RWPE1 (cell line): ENCODE measurements at regions of chr11 and their contacts with region 1.

Region 1: GRCh38 chr11:36702330-36703055 is 104.5 kb upstream of the RAG2 start:
- DNase-seq: peak; percentile 78
- H3K27ac ChIP-seq: no peak overlapping the region
- CTCF ChIP-seq: peak; percentile 86

Region 2: DNA sequence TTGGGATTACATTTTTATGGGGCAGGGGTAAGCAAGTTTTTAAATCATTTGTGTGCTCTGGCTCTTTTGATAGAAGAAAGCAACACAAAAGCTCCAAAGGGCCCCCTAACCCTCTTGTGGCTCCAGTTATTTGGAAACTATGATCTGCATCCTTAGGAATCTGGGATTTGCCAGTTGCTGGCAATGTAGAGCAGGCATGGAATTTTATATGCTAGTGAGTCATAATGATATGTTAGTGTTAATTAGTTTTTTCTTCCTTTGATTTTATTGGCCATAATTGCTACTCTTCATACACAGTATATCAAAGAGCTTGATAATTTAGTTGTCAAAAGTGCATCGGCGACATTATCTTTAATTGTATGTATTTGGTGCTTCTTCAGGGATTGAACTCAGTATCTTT is 124.6 kb before region 1 on chr11:
- CTCF ChIA-PET with region 1: no interaction called
- POLR2A ChIA-PET with region 1: no interaction called
- DNase-seq: peak; percentile 10
- H3K27ac ChIP-seq: no peak overlapping the region
- CTCF ChIP-seq: no peak

Region 3: GRCh38 chr11:36738292-36738861 is 35.9 kb after region 1 on chr11:
- CTCF ChIA-PET with region 1: interaction called, 10 read pairs
- POLR2A ChIA-PET with region 1: no interaction called
- DNase-seq: no peak
- H3K27ac ChIP-seq: no peak overlapping the region
- CTCF ChIP-seq: no peak